HCT116 (cell line): ENCODE measurements at regions of chr1 and their contacts with region 1.

Region 1: GRCh38 chr1:165597883-165598675 is 33.0 kb upstream of the MGST3 start:
- DNase-seq: peak; percentile 91
- ATAC-seq: peak; percentile 97
- H3K4me3 ChIP-seq: peak overlapping the region; percentile 57 to 61
- H3K27ac ChIP-seq: peak overlapping the region; percentile 53
- H3K4me1 ChIP-seq: peaks cover 12 to 23% of the 10 kb centered on the region in 2 experiments
- H3K27me3 ChIP-seq: peaks cover 17% of the 10 kb centered on the region
- CTCF ChIP-seq: no peak
- POLR2A ChIP-seq: no peak
- RAD21 ChIP-seq: no peak

Region 2: GRCh38 chr1:165144757-165145397 is 453.2 kb before region 1 on chr1:
- CTCF ChIA-PET with region 1: no interaction called
- POLR2A ChIA-PET with region 1: no interaction called
- RAD21 ChIA-PET with region 1: no interaction called
- intact Hi-C with region 1: loop called (anchors 1 kb)
- DNase-seq: peak; percentile 47
- ATAC-seq: peak; percentile 95
- H3K4me3 ChIP-seq: no peak overlapping the region
- H3K27ac ChIP-seq: no peak overlapping the region
- H3K4me1 ChIP-seq: no peaks in the 10 kb centered on the region
- H3K27me3 ChIP-seq: peaks cover 5% of the 10 kb centered on the region; the same call in 1 of the 2 replicates
- CTCF ChIP-seq: peak; percentile 67 to 83 (median 80)
- POLR2A ChIP-seq: no peak
- RAD21 ChIP-seq: peak; percentile 67

Region 3: GRCh38 chr1:165367375-165367993 is 230.6 kb before region 1 on chr1:
- CTCF ChIA-PET with region 1: interaction called, 16 read pairs
- POLR2A ChIA-PET with region 1: no interaction called
- RAD21 ChIA-PET with region 1: no interaction called
- intact Hi-C with region 1: no loop called
- DNase-seq: peak; percentile 79
- ATAC-seq: peak; percentile 72
- H3K4me3 ChIP-seq: no peak overlapping the region
- H3K27ac ChIP-seq: no peak overlapping the region
- H3K4me1 ChIP-seq: peaks cover 11 to 21% of the 10 kb centered on the region in 2 experiments; a peak in 3 of 4 replicates
- H3K27me3 ChIP-seq: no peaks in the 10 kb centered on the region
- CTCF ChIP-seq: peak; percentile 62 to 97 (median 95); a peak in 5 of 6 replicates
- POLR2A ChIP-seq: no peak
- RAD21 ChIP-seq: peak; percentile 53

Region 4: DNA sequence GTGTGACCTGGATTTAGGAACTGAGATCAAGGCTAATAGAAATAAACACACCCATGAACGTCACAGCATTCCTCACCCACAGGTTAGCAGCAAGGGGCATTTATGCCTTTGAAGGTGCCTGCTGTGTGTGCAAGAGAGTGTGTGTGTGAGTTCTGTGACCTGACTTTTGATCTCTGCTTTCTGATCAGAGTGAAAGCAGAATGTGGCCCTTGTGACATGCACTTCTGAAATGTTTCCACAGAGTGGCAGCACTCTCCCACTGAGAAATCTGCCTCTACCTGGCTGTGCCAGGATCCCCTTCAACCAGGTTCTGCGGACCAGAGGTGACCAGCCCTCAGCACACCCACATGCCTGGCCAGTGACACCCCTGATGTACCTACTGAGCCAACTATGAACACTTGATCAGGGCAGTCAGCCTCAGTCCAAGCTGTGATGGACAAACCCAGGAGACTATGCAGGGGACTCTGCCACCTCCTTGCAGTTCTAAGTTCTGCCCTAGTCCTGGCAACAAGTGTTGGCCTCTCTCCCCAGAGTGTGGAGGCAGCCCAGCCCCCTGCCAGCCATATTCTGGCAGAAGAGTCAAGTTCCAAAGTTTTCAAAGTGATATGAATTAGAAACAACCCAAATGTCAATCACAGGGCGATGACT is 194.1 kb before region 1 on chr1:
- CTCF ChIA-PET with region 1: interaction called, 26 read pairs
- POLR2A ChIA-PET with region 1: no interaction called
- RAD21 ChIA-PET with region 1: no interaction called
- intact Hi-C with region 1: loop called (anchors 1 kb)
- DNase-seq: peak; percentile 24
- ATAC-seq: peak; percentile 90
- H3K4me3 ChIP-seq: no peak overlapping the region
- H3K27ac ChIP-seq: no peak overlapping the region
- H3K4me1 ChIP-seq: no peaks in the 10 kb centered on the region
- H3K27me3 ChIP-seq: 0 out of 2 replicates have a peak, but pooled peaks cover 8% of the 10 kb centered on the region
- CTCF ChIP-seq: peak; percentile 65 to 76 (median 65)
- POLR2A ChIP-seq: no peak
- RAD21 ChIP-seq: peak; percentile 89

Region 5: GRCh38 chr1:165444897-165445370 is 153.1 kb before region 1 on chr1 and contains the start of gene RXRG:
- CTCF ChIA-PET with region 1: no interaction called
- POLR2A ChIA-PET with region 1: no interaction called
- RAD21 ChIA-PET with region 1: no interaction called
- intact Hi-C with region 1: no loop called
- DNase-seq: no peak
- ATAC-seq: no peak
- H3K4me3 ChIP-seq: no peak within 1 kb of the TSS
- H3K27ac ChIP-seq: no peak within 1 kb of the TSS
- H3K4me1 ChIP-seq: no peaks in the 10 kb centered on the region
- H3K27me3 ChIP-seq: peaks cover 67% of the 10 kb centered on the region
- CTCF ChIP-seq: no peak
- POLR2A ChIP-seq: no peak
- RAD21 ChIP-seq: no peak
- total RNA-seq, gene RXRG: not detected

Region 6: GRCh38 chr1:165697881-165698760 is 100.0 kb after region 1 on chr1 and contains the start of gene ALDH9A1:
- CTCF ChIA-PET with region 1: interaction called, 4 read pairs
- POLR2A ChIA-PET with region 1: interaction called, 3 read pairs
- RAD21 ChIA-PET with region 1: no interaction called
- intact Hi-C with region 1: loop called (anchors 5 kb)
- DNase-seq: peak; percentile 65
- ATAC-seq: peak; percentile 93
- H3K4me3 ChIP-seq: peak within 1 kb of the TSS; percentile 72 to 92
- H3K27ac ChIP-seq: peak within 1 kb of the TSS; percentile 97
- H3K4me1 ChIP-seq: peaks cover 12 to 23% of the 10 kb centered on the region in 2 experiments
- H3K27me3 ChIP-seq: no peaks in the 10 kb centered on the region
- CTCF ChIP-seq: peak in 2 of 3 experiments; percentile 38 to 45; a peak in 5 of 6 replicates
- POLR2A ChIP-seq: peak; percentile 81
- RAD21 ChIP-seq: peak; percentile 47
- total RNA-seq, gene ALDH9A1: 46.0 TPM

Region 7: DNA sequence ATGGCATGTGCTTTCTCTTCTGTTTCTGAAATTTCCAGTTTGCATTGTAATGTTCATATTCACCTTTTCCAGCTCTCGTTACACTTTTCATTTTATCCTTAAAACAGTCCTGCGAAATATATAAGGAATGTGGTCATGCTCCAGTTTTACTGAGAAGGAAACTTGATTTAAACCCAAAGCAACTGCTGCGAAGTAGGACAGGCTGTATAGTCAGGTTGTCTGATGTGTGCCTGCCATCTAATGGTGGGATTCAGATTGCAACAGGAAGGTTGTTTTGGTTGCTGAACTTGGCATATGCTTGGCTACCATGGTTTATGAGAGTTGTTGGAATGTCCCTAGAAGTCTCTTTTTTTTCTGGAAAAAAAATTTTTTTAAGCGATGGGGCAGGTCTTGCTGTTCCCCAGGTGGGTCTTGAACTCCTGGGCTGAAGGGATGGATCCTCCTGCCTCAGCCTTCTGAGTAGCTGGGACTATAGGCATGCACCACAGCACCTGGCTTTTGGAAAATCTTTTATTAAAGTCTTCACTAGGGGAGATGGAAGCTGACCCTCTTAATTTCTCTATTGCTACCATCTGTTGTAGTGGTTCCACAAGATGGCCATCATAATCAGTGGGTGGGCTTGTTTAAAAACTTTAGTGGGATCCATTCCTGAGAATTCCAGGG is 316.2 kb after region 1 on chr1:
- CTCF ChIA-PET with region 1: interaction called, 25 read pairs
- POLR2A ChIA-PET with region 1: no interaction called
- RAD21 ChIA-PET with region 1: no interaction called
- intact Hi-C with region 1: loop called (anchors 1 kb)
- DNase-seq: peak; percentile 54
- ATAC-seq: peak; percentile 80
- H3K4me3 ChIP-seq: no peak overlapping the region
- H3K27ac ChIP-seq: no peak overlapping the region
- H3K4me1 ChIP-seq: no peaks in the 10 kb centered on the region
- H3K27me3 ChIP-seq: no peaks in the 10 kb centered on the region
- CTCF ChIP-seq: peak; percentile 80 to 93 (median 92)
- POLR2A ChIP-seq: no peak
- RAD21 ChIP-seq: peak; percentile 96